Caco-2 (cell line): ENCODE measurements at regions of chr11 and their contacts with region 1.

Region 1: DNA sequence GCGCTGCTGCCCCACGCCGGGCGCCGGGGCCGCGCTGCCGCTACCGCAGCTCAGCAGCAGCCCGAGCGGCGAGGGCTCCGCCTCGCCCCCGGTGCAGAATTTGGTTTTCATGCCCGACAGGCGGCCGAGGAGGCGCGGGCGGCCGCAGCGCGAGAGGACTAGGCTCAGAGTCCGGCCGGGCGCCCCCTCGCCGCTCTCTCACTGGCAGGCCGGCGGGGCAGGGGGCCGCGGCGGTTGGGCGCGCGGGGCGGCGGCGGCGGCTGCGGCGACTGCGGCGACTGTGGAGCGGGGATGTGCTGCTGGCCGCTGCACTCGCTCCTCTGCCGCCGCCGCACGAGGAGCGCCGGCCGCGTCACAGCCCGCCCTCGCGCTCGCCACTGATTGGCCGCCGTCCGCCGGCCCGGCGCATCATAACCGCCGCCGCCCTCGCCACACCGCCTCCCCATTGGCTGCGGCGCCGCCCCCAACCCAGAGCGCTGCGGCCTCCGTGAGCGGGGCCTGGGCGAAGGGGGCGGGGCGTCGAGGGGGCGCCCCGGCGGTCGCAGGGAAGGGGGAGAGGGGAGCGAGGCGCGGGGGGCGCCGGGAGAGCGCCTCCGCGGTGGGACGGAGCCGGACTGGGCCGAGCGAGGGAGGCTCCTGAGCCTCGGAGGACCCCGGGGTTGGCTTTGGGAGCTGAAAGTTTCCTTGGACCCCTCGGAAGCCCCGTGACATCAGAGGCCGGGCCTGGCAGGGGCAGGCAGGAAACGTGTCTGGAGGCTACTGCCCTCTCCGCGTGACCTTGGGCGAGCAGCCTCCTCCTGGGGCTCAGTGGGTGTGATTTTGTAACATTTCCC is at the start of gene CHKA:
- DNase-seq: peak; percentile 96 to 99
- H3K4me3 ChIP-seq: peak within 1 kb of the TSS; percentile 64
- H3K4me3 Mint-ChIP-seq: peak within 1 kb of the TSS; percentile 82
- H3K27ac Mint-ChIP-seq: peak within 1 kb of the TSS; percentile 96
- H3K4me1 ChIP-seq: peaks cover 76% of the 10 kb centered on the region
- H3K4me1 Mint-ChIP-seq: peaks cover 45% of the 10 kb centered on the region
- H3K27me3 ChIP-seq: no peaks in the 10 kb centered on the region
- H3K27me3 Mint-ChIP-seq: no peaks in the 10 kb centered on the region
- CTCF ChIP-seq: peak in 1 of 2 experiments; percentile 5
- total RNA-seq, gene CHKA: 169 TPM in 2 replicates

Region 2: DNA sequence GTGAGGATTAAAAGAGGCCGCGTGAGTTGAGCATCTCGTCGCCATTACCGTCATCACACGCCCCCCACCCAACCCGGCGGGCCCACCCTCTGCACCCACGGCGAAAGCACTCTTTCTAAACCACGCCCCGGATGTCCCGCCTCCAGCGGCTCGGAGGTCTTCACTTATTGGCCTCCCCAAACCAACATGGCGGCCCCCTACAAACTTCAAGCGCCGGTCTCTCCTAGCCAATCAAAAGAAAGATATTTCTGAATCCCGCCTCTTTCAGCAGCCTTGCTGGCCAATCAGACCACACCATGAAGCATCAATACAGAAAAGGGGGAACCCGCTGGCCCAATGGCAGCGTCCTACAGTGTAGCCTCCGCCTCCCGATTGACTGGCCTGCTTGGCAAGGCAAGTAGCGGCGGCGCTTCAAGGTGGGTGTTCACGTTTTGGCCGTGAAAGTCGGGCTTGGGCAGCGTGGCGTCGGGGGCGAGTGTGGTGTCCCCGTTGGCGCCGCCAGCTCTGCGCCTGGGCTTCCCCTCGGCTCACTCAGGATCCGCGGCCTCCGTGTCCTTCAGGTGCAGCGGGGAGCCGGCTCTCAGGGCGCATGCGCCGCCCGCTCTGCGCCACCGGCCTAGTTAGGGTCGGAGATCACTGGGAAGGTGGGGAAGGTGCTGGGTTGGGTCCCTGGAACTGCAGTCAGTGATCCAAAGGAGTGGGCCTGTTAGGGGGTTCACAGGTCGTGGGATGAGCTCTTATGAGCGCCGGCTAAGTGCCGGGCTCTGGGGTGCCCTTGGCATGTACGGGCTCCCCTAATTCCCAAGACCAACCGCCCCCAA is 90.8 kb before region 1 on chr11 and contains the start of gene NDUFS8:
- CTCF ChIA-PET with region 1: no interaction called
- POLR2A ChIA-PET with region 1: interaction called, 5 read pairs
- intact Hi-C with region 1: loop called (anchors 5 kb)
- DNase-seq: peak; percentile 99 to 100
- H3K4me3 ChIP-seq: peak within 1 kb of the TSS; percentile 98
- H3K4me3 Mint-ChIP-seq: peak within 1 kb of the TSS; percentile 85
- H3K27ac Mint-ChIP-seq: peak within 1 kb of the TSS; percentile 90
- H3K4me1 ChIP-seq: peaks cover 13% of the 10 kb centered on the region
- H3K4me1 Mint-ChIP-seq: peaks cover 12% of the 10 kb centered on the region
- H3K27me3 ChIP-seq: no peaks in the 10 kb centered on the region
- H3K27me3 Mint-ChIP-seq: no peaks in the 10 kb centered on the region
- CTCF ChIP-seq: no peak
- total RNA-seq, gene NDUFS8: 309 and 334 TPM in 2 replicates

Region 3: DNA sequence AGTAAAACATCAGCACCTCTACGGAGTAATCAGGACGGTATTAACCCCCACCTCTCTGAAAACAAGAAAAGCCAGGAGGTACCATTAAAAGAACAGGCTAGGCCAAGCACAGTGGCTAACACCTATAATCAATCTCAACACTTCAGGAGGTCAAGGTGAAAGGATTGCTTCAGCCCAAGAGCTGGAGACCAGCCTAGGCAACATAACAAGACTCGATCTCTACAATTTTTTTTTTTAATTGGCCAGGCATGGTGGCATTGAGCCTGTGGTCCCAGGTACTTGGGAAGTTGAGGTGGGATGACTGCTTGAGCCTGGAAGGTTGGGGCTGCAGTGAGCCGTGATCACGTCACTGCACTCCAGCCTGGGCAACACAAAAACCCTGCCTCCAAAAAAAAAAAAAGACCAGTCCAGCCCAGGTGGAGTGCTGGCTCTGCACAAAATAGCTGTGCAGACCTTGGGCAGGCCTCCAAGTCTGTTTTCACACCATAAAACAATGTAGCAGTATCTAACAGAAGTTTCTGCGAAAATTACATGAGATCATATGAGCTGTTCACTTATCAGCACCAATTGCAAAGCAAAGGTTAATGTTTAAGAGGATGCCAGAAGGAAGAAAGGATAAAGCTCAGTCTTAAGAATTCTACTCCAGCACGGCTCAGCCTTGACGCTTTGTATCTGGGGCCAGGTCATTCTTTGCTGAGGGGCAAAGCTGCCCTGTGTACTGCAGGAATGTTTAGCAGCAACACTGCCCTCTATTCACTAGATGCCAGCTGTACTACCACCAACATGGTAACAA is 14.9 kb before region 1 on chr11:
- CTCF ChIA-PET with region 1: interaction called, 3 read pairs
- POLR2A ChIA-PET with region 1: interaction called, 17 read pairs
- intact Hi-C with region 1: no loop called
- DNase-seq: peak; percentile 62 to 71
- H3K4me3 ChIP-seq: no peak overlapping the region
- H3K4me3 Mint-ChIP-seq: peak overlapping the region; percentile 40
- H3K27ac Mint-ChIP-seq: peak overlapping the region; percentile 59
- H3K4me1 ChIP-seq: peaks cover 37% of the 10 kb centered on the region
- H3K4me1 Mint-ChIP-seq: peaks cover 43% of the 10 kb centered on the region
- H3K27me3 ChIP-seq: no peaks in the 10 kb centered on the region
- H3K27me3 Mint-ChIP-seq: no peaks in the 10 kb centered on the region
- CTCF ChIP-seq: no peak

Region 4: GRCh38 chr11:68146704-68147474 is 25.6 kb after region 1 on chr11:
- CTCF ChIA-PET with region 1: interaction called, 3 read pairs
- POLR2A ChIA-PET with region 1: interaction called, 5 read pairs
- intact Hi-C with region 1: loop called (anchors 1 kb)
- DNase-seq: peak; percentile 88 to 94
- H3K4me3 ChIP-seq: no peak overlapping the region
- H3K4me3 Mint-ChIP-seq: no peak overlapping the region
- H3K27ac Mint-ChIP-seq: peak overlapping the region; percentile 0
- H3K4me1 ChIP-seq: peaks cover 41% of the 10 kb centered on the region
- H3K4me1 Mint-ChIP-seq: peaks cover 26% of the 10 kb centered on the region
- H3K27me3 ChIP-seq: no peaks in the 10 kb centered on the region
- H3K27me3 Mint-ChIP-seq: no peaks in the 10 kb centered on the region
- CTCF ChIP-seq: peak in 1 of 2 experiments; percentile 6

Region 5: DNA sequence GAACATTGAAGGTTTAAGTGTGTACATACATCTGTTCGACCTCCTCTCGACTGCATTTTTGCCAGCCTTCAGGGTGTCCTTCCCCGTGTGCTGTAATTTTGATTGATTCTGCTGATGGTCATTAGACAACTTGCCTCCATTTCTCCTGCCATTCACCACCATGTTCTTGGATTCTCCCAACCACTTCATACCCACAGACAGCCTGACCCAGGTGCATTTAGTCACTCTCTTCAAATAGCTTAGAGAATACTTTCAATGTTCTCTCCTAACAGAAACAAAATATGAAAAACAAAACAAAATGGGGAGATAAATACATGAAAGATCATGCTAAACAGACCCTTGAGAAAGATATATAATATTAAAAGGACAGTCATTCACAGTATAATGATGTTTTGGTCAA is 68.6 kb after region 1 on chr11:
- CTCF ChIA-PET with region 1: no interaction called
- POLR2A ChIA-PET with region 1: no interaction called
- intact Hi-C with region 1: no loop called
- DNase-seq: no peak
- H3K4me3 ChIP-seq: no peak overlapping the region
- H3K4me3 Mint-ChIP-seq: no peak overlapping the region
- H3K27ac Mint-ChIP-seq: no peak overlapping the region
- H3K4me1 ChIP-seq: no peaks in the 10 kb centered on the region
- H3K4me1 Mint-ChIP-seq: peaks cover 14% of the 10 kb centered on the region
- H3K27me3 ChIP-seq: no peaks in the 10 kb centered on the region
- H3K27me3 Mint-ChIP-seq: no peaks in the 10 kb centered on the region
- CTCF ChIP-seq: no peak

Region 6: GRCh38 chr11:68206187-68206601 is 84.9 kb after region 1 on chr11:
- CTCF ChIA-PET with region 1: interaction called, 4 read pairs
- POLR2A ChIA-PET with region 1: interaction called, 4 read pairs
- intact Hi-C with region 1: loop called (anchors 2 kb)
- DNase-seq: peak in 1 of 2 experiments; percentile 70
- H3K4me3 ChIP-seq: no peak overlapping the region
- H3K4me3 Mint-ChIP-seq: no peak overlapping the region
- H3K27ac Mint-ChIP-seq: no peak overlapping the region
- H3K4me1 ChIP-seq: peaks cover 8% of the 10 kb centered on the region; the same call in 1 of the 2 replicates
- H3K4me1 Mint-ChIP-seq: peaks cover 26% of the 10 kb centered on the region
- H3K27me3 ChIP-seq: no peaks in the 10 kb centered on the region
- H3K27me3 Mint-ChIP-seq: no peaks in the 10 kb centered on the region
- CTCF ChIP-seq: peak; percentile 89 to 95

Region 7: GRCh38 chr11:68271781-68272608 is 150.7 kb after region 1 on chr11 and contains the start of gene C11orf24:
- CTCF ChIA-PET with region 1: no interaction called
- POLR2A ChIA-PET with region 1: interaction called, 3 read pairs
- intact Hi-C with region 1: loop called (anchors 10 kb)
- DNase-seq: peak; percentile 97 to 100
- H3K4me3 ChIP-seq: peak within 1 kb of the TSS; percentile 93
- H3K4me3 Mint-ChIP-seq: peak within 1 kb of the TSS; percentile 100
- H3K27ac Mint-ChIP-seq: peak within 1 kb of the TSS; percentile 98
- H3K4me1 ChIP-seq: peaks cover 33% of the 10 kb centered on the region
- H3K4me1 Mint-ChIP-seq: peaks cover 28% of the 10 kb centered on the region
- H3K27me3 ChIP-seq: no peaks in the 10 kb centered on the region
- H3K27me3 Mint-ChIP-seq: no peaks in the 10 kb centered on the region
- CTCF ChIP-seq: peak in 1 of 2 experiments; percentile 10
- total RNA-seq, gene C11orf24: 79.8 and 83.2 TPM in 2 replicates